Calu3 (cell line): ENCODE measurements at regions of chr2 and their contacts with region 1.

Region 1: DNA sequence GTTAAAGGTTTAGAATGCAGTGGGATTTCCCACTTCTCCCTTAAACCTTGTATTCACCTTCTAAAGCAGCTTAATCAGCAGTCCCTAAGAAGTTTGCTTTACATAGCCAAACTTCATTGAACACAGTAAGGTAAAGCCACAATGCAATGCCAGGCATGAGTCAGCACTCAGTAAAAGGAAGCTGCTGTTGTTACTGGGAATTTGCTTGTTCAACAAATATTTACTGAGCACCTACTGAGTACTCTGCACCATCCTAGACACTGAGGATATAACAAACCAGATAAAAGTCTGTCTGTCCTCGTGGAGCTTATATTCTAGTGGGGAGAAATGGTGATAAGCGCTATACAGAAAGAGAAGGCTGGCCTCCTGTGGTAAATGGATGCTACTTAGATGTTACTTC is 162.7 kb downstream of the PKP4 start:
- DNase-seq: no peak
- H3K4me3 Mint-ChIP-seq: no peak overlapping the region
- H3K27ac Mint-ChIP-seq: peak overlapping the region; percentile 8
- H3K4me1 Mint-ChIP-seq: peaks cover 13% of the 10 kb centered on the region
- H3K27me3 Mint-ChIP-seq: no peaks in the 10 kb centered on the region
- CTCF ChIP-seq: no peak

Region 2: GRCh38 chr2:158464426-158465281 is 154.8 kb before region 1 on chr2:
- CTCF ChIA-PET with region 1: no interaction called
- intact Hi-C with region 1: loop called (anchors 5 kb)
- DNase-seq: no peak
- H3K4me3 Mint-ChIP-seq: no peak overlapping the region
- H3K27ac Mint-ChIP-seq: no peak overlapping the region
- H3K4me1 Mint-ChIP-seq: peaks cover 44% of the 10 kb centered on the region
- H3K27me3 Mint-ChIP-seq: no peaks in the 10 kb centered on the region
- CTCF ChIP-seq: peak; percentile 56